ENCODE measurements at regions of chr3 and their contacts with region 1.

Region 1: DNA sequence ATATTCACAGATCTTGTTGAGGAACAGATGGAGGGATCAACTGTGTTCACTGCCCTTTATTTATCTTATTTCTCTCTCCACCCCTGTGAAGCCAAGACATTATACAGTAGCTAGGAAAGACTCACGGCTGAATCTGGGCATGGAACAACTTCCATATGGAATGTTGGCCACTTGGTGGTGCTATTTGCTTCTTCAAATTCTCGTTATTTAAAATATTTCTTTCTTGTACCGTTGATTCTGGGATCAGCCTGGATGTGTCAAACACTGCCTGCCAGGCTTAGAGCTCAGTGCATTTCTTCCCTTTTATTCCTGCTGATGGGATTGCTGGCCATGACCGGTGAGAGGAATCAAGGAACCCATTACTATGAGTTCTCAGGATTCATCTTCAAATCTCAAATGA is 17.5 kb upstream of the GASK1A start:
- DNase-seq: peak; percentile 60

Region 2: DNA sequence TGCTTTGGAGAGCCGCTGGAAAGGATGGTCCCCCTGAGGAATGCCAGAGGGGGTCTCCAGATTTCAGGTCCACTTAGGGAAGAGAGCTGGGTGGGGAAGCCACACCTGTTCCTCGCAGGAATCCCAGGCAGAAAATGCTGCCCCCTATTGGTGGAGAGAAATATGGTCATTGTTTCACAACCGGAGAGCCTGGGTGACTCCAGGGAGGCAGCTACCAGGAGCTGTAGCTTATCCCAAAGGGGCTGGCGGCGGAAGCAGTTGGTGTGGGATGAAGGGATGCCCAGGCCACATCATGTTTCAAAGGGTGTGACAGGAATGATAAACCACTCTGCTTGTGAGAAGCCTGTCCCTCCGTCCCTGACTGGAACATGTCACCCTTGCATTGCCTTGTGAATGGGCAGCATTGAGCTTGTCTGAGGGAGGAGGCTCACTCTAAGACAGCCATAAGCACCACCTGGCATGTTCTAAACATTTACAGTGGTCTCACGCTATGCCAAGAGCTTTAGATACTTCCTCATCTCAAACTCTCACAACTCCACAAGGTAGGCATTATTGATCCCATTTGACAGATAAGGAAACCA is 109.8 kb after region 1 on chr3:
- CTCF ChIA-PET with region 1: interaction called, 11 read pairs
- POLR2A ChIA-PET with region 1: no interaction called
- DNase-seq: peak; percentile 54

Region 3: DNA sequence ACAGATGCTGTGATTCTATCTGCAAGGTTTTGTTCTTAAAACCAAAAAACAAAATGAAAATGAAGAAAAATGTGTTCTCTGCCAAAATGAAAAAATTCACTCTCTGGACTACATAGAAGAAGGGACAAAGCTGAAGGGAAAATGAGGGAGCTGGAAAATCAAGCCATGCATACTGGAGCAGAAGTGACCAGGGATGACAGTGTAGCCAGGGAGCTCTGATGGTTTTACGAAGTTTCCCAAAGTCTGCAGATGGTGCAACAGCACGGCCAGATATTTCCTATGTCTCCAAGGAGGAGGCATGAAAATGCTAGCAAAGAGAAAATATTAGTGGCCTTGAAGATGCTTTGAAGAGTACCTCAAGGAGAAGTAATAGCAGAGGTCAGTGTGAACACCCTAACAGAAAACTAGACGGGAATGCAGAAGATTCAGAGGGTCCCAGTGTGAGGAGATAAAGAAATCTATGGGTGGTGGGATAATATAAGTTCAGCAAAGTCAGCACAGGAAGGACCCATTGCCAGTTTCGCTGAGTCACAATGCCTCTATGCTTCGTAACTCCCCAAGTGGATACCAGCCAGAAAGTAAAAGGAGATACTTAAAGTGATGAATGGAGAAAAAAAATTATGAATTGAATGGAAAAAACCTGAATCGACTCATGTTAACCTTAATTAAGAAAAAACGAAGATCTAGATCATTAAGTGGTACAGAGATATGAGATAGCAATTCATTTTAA is 183.3 kb after region 1 on chr3:
- CTCF ChIA-PET with region 1: no interaction called
- POLR2A ChIA-PET with region 1: no interaction called
- DNase-seq: no peak

Region 4: GRCh38 chr3:43155464-43156121 is 194.0 kb after region 1 on chr3:
- CTCF ChIA-PET with region 1: interaction called, 18 read pairs
- POLR2A ChIA-PET with region 1: no interaction called
- DNase-seq: peak; percentile 77

Region 5: DNA sequence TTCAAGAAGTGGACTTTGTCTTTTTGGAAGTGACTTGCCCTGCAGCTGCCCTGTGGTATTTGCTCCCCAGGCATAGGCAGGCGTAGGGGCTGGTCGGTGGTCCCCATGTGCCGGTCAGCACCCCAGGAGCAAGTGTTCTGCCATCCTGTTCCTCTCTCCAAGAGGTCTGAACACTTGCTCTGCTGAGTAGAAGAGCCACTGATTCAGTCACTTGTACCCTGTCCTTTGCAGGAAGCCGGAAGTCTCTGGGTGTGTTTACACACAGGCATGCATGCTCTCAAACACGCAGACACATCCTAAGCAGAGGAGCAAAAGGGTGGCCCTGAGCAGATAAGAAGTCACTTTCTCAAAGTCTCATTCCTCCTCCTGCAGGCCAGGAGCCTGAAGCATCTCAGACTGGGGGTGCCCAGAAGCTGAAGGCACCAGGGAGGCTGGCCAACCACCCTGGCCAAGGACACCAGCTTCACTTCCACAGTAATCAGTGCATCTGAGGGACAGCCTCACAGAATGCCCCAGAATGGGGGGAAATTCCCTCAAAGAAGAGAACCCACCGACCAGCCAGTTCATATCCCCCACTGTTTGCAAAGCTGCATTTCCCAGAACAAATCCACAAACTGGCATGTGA is 233.0 kb after region 1 on chr3:
- CTCF ChIA-PET with region 1: no interaction called
- POLR2A ChIA-PET with region 1: no interaction called
- DNase-seq: no peak

Region 6: DNA sequence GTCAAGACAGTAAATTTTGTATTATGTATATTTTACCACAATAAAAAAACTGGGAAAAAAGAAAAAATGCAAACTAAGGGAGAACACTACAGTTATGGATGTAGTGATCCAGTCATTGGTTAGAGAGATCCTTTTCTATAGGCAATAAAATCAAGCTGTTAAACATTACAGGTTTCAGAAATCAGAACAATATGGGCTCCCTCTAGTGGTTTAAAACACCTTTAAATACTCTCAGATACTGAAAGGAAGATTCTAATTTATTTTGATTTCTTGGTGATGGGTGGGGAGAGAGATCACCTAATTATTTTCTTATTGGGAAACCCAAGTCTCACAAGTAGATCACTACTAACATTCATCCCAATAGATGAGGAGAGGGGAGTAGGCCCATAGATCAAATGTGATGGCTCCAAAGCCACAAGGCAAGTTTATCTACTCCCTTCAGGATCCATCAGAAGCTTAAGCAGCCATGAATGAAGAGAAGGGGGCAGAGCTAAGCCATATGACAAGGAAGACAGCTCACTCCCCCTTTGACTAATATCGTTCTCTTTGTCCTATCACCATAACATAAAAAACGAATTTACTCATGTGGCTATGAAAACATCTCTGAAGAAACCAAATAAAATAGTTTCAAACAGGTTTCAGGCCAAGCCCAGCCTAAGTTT is 541.6 kb after region 1 on chr3:
- CTCF ChIA-PET with region 1: interaction called, 11 read pairs
- POLR2A ChIA-PET with region 1: no interaction called
- DNase-seq: no peak

Measured in HEK293T (cell line).